Activated CD4-positive, alpha-beta T cell treated with anti-CD3 and anti-CD28 coated beads, Interleukin-2, amount 10 ng/mL, durations not matched to agents 24 days and 14 days (primary cell): ENCODE measurements at regions of chr21 and their contacts with region 1.

Region 1: DNA sequence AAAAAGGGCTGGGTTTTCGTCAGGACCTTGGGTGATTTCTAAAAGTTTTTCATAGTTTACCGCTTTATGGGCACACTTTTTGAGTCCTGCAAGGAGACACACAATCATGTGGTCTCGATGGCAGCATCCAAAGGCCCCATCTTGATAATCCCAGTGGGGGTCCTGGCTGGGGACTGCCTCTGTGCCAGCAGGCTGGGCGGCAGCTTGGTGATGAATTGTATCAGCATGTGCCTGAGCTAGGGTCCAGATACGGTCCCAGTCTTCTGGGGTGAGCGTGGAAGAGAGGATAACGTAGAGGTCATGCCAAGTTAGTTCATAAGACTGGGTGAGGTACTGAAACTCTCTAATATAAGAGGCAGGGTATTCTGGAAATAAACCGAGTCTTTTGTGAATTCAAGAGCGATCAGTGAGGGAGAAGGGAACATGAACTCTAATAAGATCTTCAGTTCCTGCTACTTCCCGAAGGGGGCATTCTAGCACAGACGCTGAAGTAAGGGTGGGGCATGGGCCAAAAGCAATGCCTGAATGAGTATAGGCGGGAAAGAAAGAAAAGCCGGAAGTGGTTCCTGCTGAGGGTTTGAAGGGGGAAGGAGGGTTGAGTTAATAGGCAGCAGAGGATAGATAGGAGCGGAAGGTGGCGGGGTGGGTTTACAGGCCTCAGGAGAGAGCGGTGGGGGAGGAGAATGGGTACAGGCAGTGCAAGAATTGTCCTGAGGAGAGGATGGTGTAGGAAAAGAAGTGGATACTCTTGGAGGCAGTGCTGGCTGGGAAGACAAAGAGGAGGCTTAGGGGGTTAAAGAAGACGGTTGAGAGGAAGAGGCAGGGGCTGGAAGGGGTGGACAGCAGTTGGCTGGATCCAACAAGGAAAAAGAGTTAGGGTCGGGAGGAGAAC is 1.6 kb downstream of the ERVH48-1 start:
- DNase-seq: peak; percentile 94
- H3K4me3 Mint-ChIP-seq: peak overlapping the region; percentile 75
- H3K27ac Mint-ChIP-seq: peak overlapping the region; percentile 87
- H3K4me1 Mint-ChIP-seq: peaks cover 22% of the 10 kb centered on the region
- H3K27me3 Mint-ChIP-seq: no peaks in the 10 kb centered on the region

Region 2: DNA sequence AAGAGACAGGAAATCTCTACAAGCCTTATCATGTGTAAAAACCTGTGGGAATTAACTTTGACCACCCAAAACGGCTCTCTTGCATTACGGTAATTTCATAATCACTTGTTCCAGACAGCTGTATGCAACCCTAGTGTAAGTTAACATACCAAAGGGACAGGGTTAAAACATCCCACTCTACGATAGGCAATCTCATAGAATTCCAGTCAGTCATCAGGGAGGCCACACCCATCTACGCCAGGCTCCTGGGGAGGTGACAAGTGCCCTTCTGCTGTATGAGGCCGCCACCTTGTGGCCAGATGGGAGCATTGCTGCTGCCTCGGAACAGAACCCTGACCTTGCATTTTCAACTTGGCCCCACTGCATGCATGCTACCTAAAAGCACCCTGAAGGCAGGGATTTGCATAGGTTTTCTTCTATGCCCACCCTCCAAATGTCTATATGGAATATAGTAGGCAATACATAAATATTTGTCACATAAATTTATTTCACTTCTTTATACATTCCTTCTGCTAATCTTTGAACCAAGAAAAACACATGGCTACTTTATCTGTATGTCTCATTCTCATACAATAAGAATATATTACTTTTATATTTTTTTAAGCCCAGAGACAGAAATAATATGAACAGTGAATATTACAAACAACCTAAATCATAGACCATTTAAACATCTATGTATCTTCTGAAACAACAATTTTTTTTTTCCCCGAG is 722.9 kb after region 1 on chr21:
- intact Hi-C with region 1: loop called (anchors 1 kb)
- DNase-seq: peak; percentile 95
- H3K4me3 Mint-ChIP-seq: peak overlapping the region; percentile 36
- H3K27ac Mint-ChIP-seq: no peak overlapping the region
- H3K4me1 Mint-ChIP-seq: peaks cover 22% of the 10 kb centered on the region
- H3K27me3 Mint-ChIP-seq: peaks cover 9% of the 10 kb centered on the region